Caco-2 (cell line): ENCODE measurements at regions of chr7 and their contacts with region 1.

Region 1: GRCh38 chr7:132518102-132518838 is 58.0 kb downstream of the PLXNA4 start:
- DNase-seq: peak in 1 of 2 experiments; percentile 51
- H3K4me3 ChIP-seq: no peak overlapping the region
- H3K4me3 Mint-ChIP-seq: no peak overlapping the region
- H3K27ac Mint-ChIP-seq: no peak overlapping the region
- H3K4me1 ChIP-seq: no peaks in the 10 kb centered on the region
- H3K4me1 Mint-ChIP-seq: no peaks in the 10 kb centered on the region
- H3K27me3 ChIP-seq: no peaks in the 10 kb centered on the region; the same call in none of the 2 replicates
- H3K27me3 Mint-ChIP-seq: peaks cover 19% of the 10 kb centered on the region
- CTCF ChIP-seq: peak; percentile 53

Region 2: DNA sequence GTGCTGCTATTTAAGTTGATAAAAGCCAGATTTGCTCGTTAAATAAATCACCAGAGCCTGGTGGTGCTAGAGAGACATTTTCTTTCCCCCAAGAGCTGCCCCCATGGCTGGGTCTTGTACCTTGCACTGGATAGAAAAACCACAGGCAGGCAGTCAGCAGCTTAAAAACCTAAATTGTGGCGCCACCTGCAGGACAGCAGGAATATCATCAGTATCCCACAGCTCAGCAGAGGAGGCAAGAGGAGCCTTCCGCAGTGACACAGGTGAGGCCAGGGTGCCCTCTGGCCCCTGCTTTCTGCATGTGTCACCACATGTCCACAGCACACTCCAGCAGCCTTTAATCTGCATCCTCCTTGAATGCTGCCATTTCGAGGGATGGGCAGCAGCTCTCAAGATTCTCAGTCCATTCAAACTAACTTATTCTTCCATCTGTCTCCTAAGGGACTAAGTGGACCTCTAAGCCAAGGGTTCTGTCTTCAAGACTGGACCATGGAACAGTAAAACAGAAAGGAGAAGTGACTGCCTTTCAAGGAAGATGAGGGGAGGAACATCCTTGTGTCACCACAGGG is 62.5 kb after region 1 on chr7:
- CTCF ChIA-PET with region 1: interaction called, 4 read pairs
- POLR2A ChIA-PET with region 1: no interaction called
- intact Hi-C with region 1: loop called (anchors 1 kb)
- DNase-seq: peak; percentile 78 to 80
- H3K4me3 ChIP-seq: no peak overlapping the region
- H3K4me3 Mint-ChIP-seq: no peak overlapping the region
- H3K27ac Mint-ChIP-seq: no peak overlapping the region
- H3K4me1 ChIP-seq: peaks cover 5% of the 10 kb centered on the region; the same call in 1 of the 2 replicates
- H3K4me1 Mint-ChIP-seq: no peaks in the 10 kb centered on the region
- H3K27me3 ChIP-seq: peaks cover 1% of the 10 kb centered on the region
- H3K27me3 Mint-ChIP-seq: peaks cover 27% of the 10 kb centered on the region
- CTCF ChIP-seq: peak; percentile 76 to 83